ENCODE measurements at regions of chr11 and their contacts with region 1.

Region 1: GRCh38 chr11:111601979-111602864 is at the start of gene SIK2:
- DNase-seq: peak; percentile 95 to 98 (median 96)
- ATAC-seq: peak; percentile 88 to 93 (median 91)
- H3K4me3 ChIP-seq: peak within 1 kb of the TSS; percentile 83 to 95 (median 86)
- H3K27ac ChIP-seq: peak within 1 kb of the TSS; percentile 94 to 98 (median 96)
- H3K4me1 ChIP-seq: peaks cover 1 to 31% (median 21%) of the 10 kb centered on the region in 3 donors
- H3K27me3 ChIP-seq: no peaks in the 10 kb centered on the region
- CTCF ChIP-seq: peak; percentile 50 to 93 (median 90)
- total RNA-seq, gene SIK2: 10.7 to 24.7 (median 18.3) TPM

Region 2: GRCh38 chr11:111540114-111540936 is 61.9 kb before region 1 on chr11 and contains the start of gene LAYN:
- intact Hi-C with region 1: no loop called
- DNase-seq: peak in 4 of 6 donors; percentile 22 to 70 (median 47)
- ATAC-seq: peak; percentile 38 to 63 (median 60)
- H3K4me3 ChIP-seq: peak within 1 kb of the TSS; percentile 18 to 51 (median 36)
- H3K27ac ChIP-seq: peak within 1 kb of the TSS in 2 of 4 donors; percentile 41 to 45
- H3K4me1 ChIP-seq: peaks cover 0 to 7% (median 0%) of the 10 kb centered on the region in 3 donors
- H3K27me3 ChIP-seq: peaks cover 0 to 5% (median 0%) of the 10 kb centered on the region in 4 donors
- CTCF ChIP-seq: no peak
- total RNA-seq, gene LAYN: 0.44 to 3.2 (median 0.95) TPM

Region 3: DNA sequence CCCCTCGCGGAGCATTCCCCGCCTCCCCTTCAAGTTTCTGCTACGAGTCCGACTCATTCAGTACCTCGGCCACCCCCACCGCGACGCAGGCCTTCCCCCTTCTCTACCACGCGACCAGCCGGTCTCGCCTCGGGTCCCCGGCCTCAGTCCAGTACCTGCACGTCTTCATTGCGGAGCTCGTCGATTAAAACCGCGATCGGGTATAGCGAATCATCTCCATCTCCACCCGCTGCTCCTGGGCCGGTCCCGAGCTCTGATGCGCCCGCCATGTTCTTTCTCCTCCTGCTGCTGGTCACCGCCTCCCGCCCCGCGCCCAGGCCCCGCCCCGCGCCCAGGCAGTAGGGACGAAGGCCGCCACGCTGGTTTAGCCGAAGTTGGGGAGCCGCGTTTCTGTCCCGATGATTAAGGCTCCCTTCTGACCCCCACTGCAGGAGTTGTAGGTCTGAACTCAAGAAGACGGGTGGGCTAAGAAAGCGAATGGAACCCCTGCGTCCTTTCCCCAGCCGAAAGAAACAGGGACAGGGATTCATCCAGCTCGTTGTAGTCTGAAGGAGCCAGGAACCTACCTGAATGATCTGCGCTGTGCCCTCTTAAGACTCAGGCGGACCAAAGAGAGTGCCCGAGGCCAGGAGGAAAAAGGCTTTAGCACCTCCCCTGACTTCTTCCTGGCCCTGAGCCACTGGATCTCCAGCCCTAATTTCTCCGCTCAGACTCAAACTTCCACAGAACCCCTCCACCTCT is 164.0 kb after region 1 on chr11 and contains the start of gene PPP2R1B:
- intact Hi-C with region 1: loop called in 1 of 3 experiments (anchors 5 kb)
- DNase-seq: peak; percentile 66 to 90 (median 80)
- ATAC-seq: peak; percentile 93 to 97 (median 94)
- H3K4me3 ChIP-seq: peak within 1 kb of the TSS; percentile 79 to 95 (median 90)
- H3K27ac ChIP-seq: peak within 1 kb of the TSS; percentile 66 to 88 (median 87)
- H3K4me1 ChIP-seq: peaks cover 8 to 39% (median 10%) of the 10 kb centered on the region in 3 donors
- H3K27me3 ChIP-seq: no peaks in the 10 kb centered on the region
- CTCF ChIP-seq: no peak
- total RNA-seq, gene PPP2R1B: 23.2 to 50.1 (median 34.5) TPM

Region 4: GRCh38 chr11:111777094-111778046 is 175.1 kb after region 1 on chr11:
- intact Hi-C with region 1: loop called in 1 of 3 experiments (anchors 5 kb)
- DNase-seq: peak in 1 of 6 donors; percentile 33
- ATAC-seq: peak; percentile 70 to 90 (median 85)
- H3K4me3 ChIP-seq: no peak overlapping the region
- H3K27ac ChIP-seq: peak overlapping the region in 1 of 4 donors; percentile 25
- H3K4me1 ChIP-seq: peaks cover 7 to 33% (median 14%) of the 10 kb centered on the region in 3 donors
- H3K27me3 ChIP-seq: no peaks in the 10 kb centered on the region
- CTCF ChIP-seq: peak; percentile 51 to 73 (median 59)

Measured in pancreas (tissue), 10 donors.